ENCODE measurements at regions of chr7 and their contacts with region 1.

Region 1: DNA sequence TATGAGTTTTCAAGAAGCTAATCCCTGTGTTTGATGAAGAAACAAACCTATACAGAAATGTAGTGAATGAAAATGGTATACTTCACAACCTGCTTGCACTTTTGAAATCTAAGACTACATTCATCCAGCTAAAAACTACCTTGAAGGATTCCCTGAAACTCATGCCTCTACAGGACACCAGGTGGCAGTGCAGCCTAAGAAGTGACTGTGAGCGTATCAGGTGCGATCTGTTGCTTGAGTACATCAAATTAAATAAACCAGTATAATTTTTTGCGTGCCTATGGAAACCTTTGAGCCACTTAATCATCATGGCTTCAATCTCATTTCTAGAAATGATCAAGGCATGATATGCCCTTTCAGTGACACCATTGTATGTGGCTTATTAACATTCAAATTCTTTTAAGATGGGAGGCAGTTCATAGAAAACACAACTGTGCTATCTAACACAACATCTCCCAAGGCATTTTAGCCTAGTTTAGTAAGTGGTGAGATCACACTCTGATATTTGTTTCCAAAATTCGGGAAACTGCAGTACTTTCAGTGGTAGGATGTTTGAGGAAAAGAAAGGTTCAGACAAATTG is 57.4 kb downstream of the PPP1R17 start:
- DNase-seq: peak; percentile 53
- ATAC-seq: peak; percentile 80
- H3K4me3 ChIP-seq: no peak overlapping the region
- H3K27ac ChIP-seq: no peak overlapping the region
- H3K4me1 ChIP-seq: no peaks in the 10 kb centered on the region
- H3K27me3 ChIP-seq: peaks cover 32% of the 10 kb centered on the region
- CTCF ChIP-seq: peak; percentile 70 to 89 (median 77); a peak in 5 of 6 replicates
- POLR2A ChIP-seq: no peak
- RAD21 ChIP-seq: peak; percentile 89

Region 2: GRCh38 chr7:31688372-31688771 is 56.0 kb before region 1 on chr7:
- CTCF ChIA-PET with region 1: no interaction called
- POLR2A ChIA-PET with region 1: no interaction called
- RAD21 ChIA-PET with region 1: no interaction called
- intact Hi-C with region 1: no loop called
- DNase-seq: no peak
- ATAC-seq: no peak
- H3K4me3 ChIP-seq: no peak overlapping the region
- H3K27ac ChIP-seq: no peak overlapping the region
- H3K4me1 ChIP-seq: no peaks in the 10 kb centered on the region
- H3K27me3 ChIP-seq: peaks cover 14% of the 10 kb centered on the region; the same call in 1 of the 2 replicates
- CTCF ChIP-seq: no peak
- POLR2A ChIP-seq: no peak
- RAD21 ChIP-seq: no peak

Region 3: DNA sequence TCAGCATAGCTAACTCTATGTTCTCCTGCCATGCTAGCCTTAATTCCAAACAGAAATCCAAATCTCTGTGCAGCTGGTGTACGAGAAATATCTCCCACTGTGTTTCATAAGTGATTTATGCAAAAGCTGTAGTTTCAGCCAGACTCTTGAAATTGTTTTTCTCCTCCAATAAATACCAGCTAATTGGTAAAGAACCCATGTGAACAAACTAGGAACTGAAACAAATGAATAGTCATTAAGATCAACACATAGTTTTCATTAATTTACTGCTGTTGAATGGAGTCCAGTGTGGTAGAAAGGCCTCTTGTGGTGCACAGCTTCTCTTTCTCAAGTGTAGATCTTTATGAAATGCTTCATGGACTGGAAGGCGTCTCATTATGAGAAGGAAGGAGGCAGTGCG is 39.0 kb before region 1 on chr7:
- CTCF ChIA-PET with region 1: no interaction called
- POLR2A ChIA-PET with region 1: no interaction called
- RAD21 ChIA-PET with region 1: no interaction called
- intact Hi-C with region 1: no loop called
- DNase-seq: no peak
- ATAC-seq: no peak
- H3K4me3 ChIP-seq: no peak overlapping the region
- H3K27ac ChIP-seq: no peak overlapping the region
- H3K4me1 ChIP-seq: no peaks in the 10 kb centered on the region
- H3K27me3 ChIP-seq: peaks cover 32% of the 10 kb centered on the region
- CTCF ChIP-seq: no peak
- POLR2A ChIP-seq: no peak
- RAD21 ChIP-seq: no peak

Region 4: DNA sequence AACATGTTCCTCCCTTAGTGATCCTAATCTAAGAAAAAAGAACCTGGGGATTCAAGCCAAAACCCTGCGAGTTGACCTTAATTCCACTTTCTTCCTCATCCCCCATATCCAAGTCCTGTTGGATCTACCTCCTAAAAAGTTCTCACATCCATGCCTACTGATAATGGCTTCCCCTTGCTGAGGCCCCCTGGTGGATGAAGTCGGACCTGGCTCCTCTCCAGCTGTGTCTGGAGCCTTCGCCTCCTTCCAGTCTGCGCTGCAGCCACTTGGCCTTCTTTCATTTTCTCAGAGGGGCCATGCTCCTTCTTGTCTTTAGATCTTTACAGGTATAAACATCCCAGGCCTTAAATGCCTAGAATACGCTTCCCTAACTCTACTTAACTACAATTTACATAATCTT is 317.8 kb after region 1 on chr7:
- CTCF ChIA-PET with region 1: no interaction called
- POLR2A ChIA-PET with region 1: no interaction called
- RAD21 ChIA-PET with region 1: no interaction called
- intact Hi-C with region 1: loop called (anchors 5 kb)
- DNase-seq: peak; percentile 23
- ATAC-seq: peak; percentile 80
- H3K4me3 ChIP-seq: no peak overlapping the region
- H3K27ac ChIP-seq: no peak overlapping the region
- H3K4me1 ChIP-seq: no peaks in the 10 kb centered on the region
- H3K27me3 ChIP-seq: peaks cover 16% of the 10 kb centered on the region
- CTCF ChIP-seq: peak; percentile 32 to 77 (median 76); a peak in 5 of 6 replicates
- POLR2A ChIP-seq: no peak
- RAD21 ChIP-seq: peak; percentile 38

Region 5: GRCh38 chr7:32164346-32164957 is 420.1 kb after region 1 on chr7:
- CTCF ChIA-PET with region 1: interaction called, 6 read pairs
- POLR2A ChIA-PET with region 1: no interaction called
- RAD21 ChIA-PET with region 1: no interaction called
- intact Hi-C with region 1: loop called (anchors 1 kb)
- DNase-seq: peak; percentile 43
- ATAC-seq: peak; percentile 89
- H3K4me3 ChIP-seq: no peak overlapping the region
- H3K27ac ChIP-seq: no peak overlapping the region
- H3K4me1 ChIP-seq: peaks cover 2 to 12% of the 10 kb centered on the region in 2 experiments; a peak in 3 of 4 replicates
- H3K27me3 ChIP-seq: 0 out of 2 replicates have a peak, but pooled peaks cover 2% of the 10 kb centered on the region
- CTCF ChIP-seq: peak; percentile 47 to 62 (median 58); a peak in 5 of 6 replicates
- POLR2A ChIP-seq: no peak
- RAD21 ChIP-seq: peak; percentile 64

Region 6: DNA sequence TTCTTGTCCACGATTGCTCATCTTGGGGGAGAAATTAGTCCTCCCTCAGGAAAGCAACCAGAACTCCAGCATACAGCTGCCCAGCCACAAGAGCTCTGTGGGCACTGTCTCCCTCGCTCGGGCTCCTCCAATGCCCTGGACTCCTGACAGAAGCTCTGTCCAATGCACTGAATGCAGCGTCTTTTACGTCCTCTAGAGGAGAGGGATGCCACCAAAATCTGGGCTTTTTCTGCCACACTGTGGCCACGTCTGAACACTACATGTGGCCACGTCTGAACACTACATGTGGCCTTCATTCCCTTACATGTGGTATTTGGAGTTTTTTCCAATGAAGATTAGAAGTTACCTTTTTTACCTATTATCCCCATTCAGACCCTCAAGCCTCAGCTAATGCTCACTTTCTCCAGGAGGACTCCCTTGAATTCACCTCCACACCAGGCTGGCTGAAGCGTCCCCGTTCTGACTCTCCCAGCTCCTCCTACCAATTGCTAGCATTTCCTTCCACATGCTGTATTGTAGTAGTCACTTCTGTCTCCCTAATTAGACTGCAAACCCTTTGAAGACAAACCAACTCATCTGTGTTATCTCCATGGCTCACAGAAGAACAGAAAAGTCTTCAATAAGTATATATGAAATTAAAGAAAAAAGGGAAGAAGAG is 460.1 kb after region 1 on chr7:
- CTCF ChIA-PET with region 1: interaction called, 18 read pairs
- POLR2A ChIA-PET with region 1: no interaction called
- RAD21 ChIA-PET with region 1: interaction called in 1 of 2 experiments, 4 read pairs
- intact Hi-C with region 1: loop called (anchors 1 kb)
- DNase-seq: peak; percentile 65
- ATAC-seq: peak; percentile 94
- H3K4me3 ChIP-seq: no peak overlapping the region
- H3K27ac ChIP-seq: no peak overlapping the region
- H3K4me1 ChIP-seq: no peaks in the 10 kb centered on the region
- H3K27me3 ChIP-seq: peaks cover 20% of the 10 kb centered on the region; the same call in 1 of the 2 replicates
- CTCF ChIP-seq: peak; percentile 66 to 70 (median 69); a peak in 5 of 6 replicates
- POLR2A ChIP-seq: no peak
- RAD21 ChIP-seq: peak; percentile 78

Region 7: GRCh38 chr7:32347244-32347828 is 603.0 kb after region 1 on chr7:
- CTCF ChIA-PET with region 1: interaction called, 4 read pairs
- POLR2A ChIA-PET with region 1: no interaction called
- RAD21 ChIA-PET with region 1: no interaction called
- intact Hi-C with region 1: loop called (anchors 2 kb)
- DNase-seq: peak; percentile 19
- ATAC-seq: peak; percentile 71; the same call in 1 of the 2 replicates
- H3K4me3 ChIP-seq: no peak overlapping the region
- H3K27ac ChIP-seq: no peak overlapping the region
- H3K4me1 ChIP-seq: no peaks in the 10 kb centered on the region
- H3K27me3 ChIP-seq: no peaks in the 10 kb centered on the region
- CTCF ChIP-seq: peak; percentile 48 to 87 (median 71); a peak in 5 of 6 replicates
- POLR2A ChIP-seq: no peak
- RAD21 ChIP-seq: peak; percentile 49

Region 8: DNA sequence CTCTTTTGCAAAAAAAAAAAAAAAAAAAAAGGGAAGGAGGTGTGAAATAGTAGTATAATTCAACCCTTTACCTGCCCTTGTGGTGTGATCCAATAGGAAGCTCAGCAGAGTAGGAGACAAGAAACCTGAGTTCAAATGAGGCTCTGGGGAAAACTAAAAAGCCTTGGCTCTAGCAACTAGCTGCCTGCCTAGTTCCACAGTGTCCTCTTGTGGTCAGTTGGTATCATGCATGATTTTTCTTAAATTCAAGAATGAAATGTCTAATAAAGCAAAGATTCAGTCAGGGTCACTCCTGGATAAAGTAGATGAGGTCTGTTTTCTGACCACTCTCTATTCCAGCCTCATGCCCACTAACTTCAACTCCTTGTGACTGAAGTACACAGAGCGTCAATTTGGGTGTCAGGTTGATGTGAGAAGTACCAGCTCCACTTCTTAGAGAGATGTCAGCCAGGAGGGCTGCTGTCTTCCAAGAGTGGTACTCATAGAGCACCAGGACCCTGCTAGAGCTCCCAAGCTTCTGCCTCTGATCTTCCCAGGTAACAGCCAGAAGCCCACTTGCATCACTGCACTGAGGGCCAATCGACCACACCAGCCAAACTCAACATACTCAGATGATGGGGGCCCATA is 735.3 kb after region 1 on chr7:
- CTCF ChIA-PET with region 1: no interaction called
- POLR2A ChIA-PET with region 1: no interaction called
- RAD21 ChIA-PET with region 1: no interaction called
- intact Hi-C with region 1: loop called (anchors 2 kb)
- DNase-seq: peak; percentile 49
- ATAC-seq: peak; percentile 71
- H3K4me3 ChIP-seq: no peak overlapping the region
- H3K27ac ChIP-seq: no peak overlapping the region
- H3K4me1 ChIP-seq: no peaks in the 10 kb centered on the region
- H3K27me3 ChIP-seq: no peaks in the 10 kb centered on the region
- CTCF ChIP-seq: peak; percentile 79 to 92 (median 91)
- POLR2A ChIP-seq: no peak
- RAD21 ChIP-seq: peak; percentile 94